Activated CD4-positive, alpha-beta memory T cell treated with anti-CD3 and anti-CD28 coated beads for 36 hours (primary cell): ENCODE measurements at regions of chr16 and their contacts with region 1.

Region 1: GRCh38 chr16:81136390-81137342 is 40.5 kb upstream of the GCSH start:
- DNase-seq: no peak
- H3K4me3 Mint-ChIP-seq: no peak overlapping the region
- H3K27ac Mint-ChIP-seq: no peak overlapping the region
- H3K4me1 Mint-ChIP-seq: no peaks in the 10 kb centered on the region
- H3K27me3 Mint-ChIP-seq: no peaks in the 10 kb centered on the region

Region 2: DNA sequence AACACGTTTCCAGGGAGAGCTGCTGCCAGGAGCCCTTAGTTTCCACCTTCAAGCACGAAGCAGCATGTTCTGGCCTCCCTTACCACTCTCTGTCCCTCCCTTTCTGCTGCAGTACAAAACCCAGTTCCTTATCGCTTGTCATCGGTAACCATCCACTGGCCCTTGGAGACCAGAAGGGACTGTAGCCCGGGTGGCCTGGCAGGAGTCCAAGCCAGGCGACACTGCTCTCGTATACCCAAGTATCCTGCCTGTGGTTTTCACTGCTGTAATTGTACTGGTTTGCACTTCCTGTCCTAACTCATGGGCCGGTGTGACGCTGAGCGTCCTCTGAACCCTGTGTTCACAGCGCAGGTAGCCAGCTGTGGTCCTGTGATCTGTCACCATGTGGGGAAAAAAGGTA is 1617.2 kb before region 1 on chr16:
- CTCF ChIA-PET with region 1: no interaction called
- POLR2A ChIA-PET with region 1: no interaction called
- intact Hi-C with region 1: loop called (anchors 10 kb)
- DNase-seq: peak; percentile 14
- H3K4me3 Mint-ChIP-seq: no peak overlapping the region
- H3K27ac Mint-ChIP-seq: no peak overlapping the region
- H3K4me1 Mint-ChIP-seq: peaks cover 6% of the 10 kb centered on the region
- H3K27me3 Mint-ChIP-seq: peaks cover 18% of the 10 kb centered on the region

Region 3: GRCh38 chr16:81088836-81089235 is 47.8 kb before region 1 on chr16:
- CTCF ChIA-PET with region 1: no interaction called
- POLR2A ChIA-PET with region 1: no interaction called
- intact Hi-C with region 1: no loop called
- DNase-seq: no peak
- H3K4me3 Mint-ChIP-seq: no peak overlapping the region
- H3K27ac Mint-ChIP-seq: no peak overlapping the region
- H3K4me1 Mint-ChIP-seq: peaks cover 2% of the 10 kb centered on the region
- H3K27me3 Mint-ChIP-seq: no peaks in the 10 kb centered on the region

Region 4: GRCh38 chr16:81204798-81205680 is 68.4 kb after region 1 on chr16:
- CTCF ChIA-PET with region 1: no interaction called
- POLR2A ChIA-PET with region 1: no interaction called
- intact Hi-C with region 1: no loop called
- DNase-seq: peak; percentile 12
- H3K4me3 Mint-ChIP-seq: no peak overlapping the region
- H3K27ac Mint-ChIP-seq: no peak overlapping the region
- H3K4me1 Mint-ChIP-seq: peaks cover 2% of the 10 kb centered on the region
- H3K27me3 Mint-ChIP-seq: peaks cover 12% of the 10 kb centered on the region